ENCODE measurements at regions of chr19 and their contacts with region 1.

Region 1: DNA sequence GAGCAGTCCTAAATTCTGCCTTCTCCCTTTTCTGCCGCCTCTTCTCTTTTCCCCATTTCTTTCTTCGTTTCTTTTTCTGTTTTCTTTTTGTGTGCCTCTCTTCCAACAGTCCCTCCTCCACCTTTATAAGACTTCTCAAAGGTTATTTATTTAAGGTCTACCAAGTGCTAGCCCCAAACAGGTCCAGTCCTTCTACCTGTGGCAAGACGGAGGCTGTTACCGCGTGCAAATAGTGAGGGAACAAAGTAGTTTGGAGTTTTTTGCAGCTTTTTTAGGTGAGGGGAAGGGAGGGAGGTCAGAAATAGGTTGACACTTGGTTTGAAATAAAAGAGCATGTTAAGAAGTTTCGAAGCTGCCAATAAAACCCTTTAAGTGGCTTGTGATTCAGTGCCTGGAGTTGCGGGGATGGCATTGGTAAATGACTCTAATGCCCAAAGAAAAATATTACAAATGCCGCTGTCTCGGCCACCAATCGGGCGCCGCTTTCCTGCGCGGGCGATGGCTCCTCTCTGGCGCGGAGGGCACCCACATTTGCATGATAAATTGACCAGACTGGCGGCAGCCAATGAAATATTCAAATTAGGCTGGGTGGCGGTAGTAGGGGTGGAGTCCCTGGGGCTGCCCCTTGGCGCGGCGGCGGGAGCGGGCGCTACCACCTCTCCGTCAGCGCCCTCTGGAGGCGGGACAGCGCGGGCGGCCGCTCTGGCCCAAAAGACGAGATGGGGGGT is 7.5 kb upstream of the TSHZ3 start:
- DNase-seq: peak; percentile 86
- ATAC-seq: peak; percentile 88
- H3K4me3 Mint-ChIP-seq: peak overlapping the region; percentile 28
- H3K27ac Mint-ChIP-seq: no peak overlapping the region
- H3K4me1 Mint-ChIP-seq: peaks cover 40% of the 10 kb centered on the region
- H3K27me3 Mint-ChIP-seq: peaks cover 68% of the 10 kb centered on the region

Region 2: DNA sequence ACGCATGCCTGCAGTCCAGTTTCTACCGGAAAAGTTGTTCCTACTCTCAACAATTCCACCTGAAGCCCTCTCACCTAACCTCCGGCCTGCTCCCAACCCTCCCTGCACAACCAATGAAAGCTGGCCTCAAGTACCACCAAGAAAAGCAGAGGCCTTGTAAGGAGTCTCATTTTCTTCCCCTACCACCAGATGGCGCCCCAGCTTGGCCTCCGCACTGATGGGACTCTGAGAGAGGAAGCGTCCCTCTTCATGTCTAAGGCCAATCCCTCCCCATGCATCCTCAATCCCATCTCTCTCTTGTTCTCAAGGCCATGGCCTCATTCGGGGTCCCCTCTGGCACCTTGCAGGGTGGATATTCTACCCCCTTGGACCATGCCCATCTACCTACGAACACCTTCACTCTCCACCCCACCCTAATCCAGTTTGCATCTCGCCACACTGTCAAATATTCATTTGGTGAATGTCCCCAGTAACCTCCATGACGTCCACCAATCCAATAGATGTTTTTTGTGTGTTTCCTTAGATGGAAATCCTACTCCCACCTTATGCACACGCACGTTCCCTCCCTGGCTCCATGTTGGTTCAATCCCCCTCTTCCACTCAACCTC is 571.8 kb before region 1 on chr19:
- CTCF ChIA-PET with region 1: no interaction called
- POLR2A ChIA-PET with region 1: no interaction called
- intact Hi-C with region 1: loop called (anchors 1 to 2 kb)
- DNase-seq: peak; percentile 78
- ATAC-seq: peak; percentile 51
- H3K4me3 Mint-ChIP-seq: no peak overlapping the region
- H3K27ac Mint-ChIP-seq: no peak overlapping the region
- H3K4me1 Mint-ChIP-seq: no peaks in the 10 kb centered on the region
- H3K27me3 Mint-ChIP-seq: peaks cover 10% of the 10 kb centered on the region

Region 3: GRCh38 chr19:31054430-31054829 is 302.3 kb before region 1 on chr19:
- CTCF ChIA-PET with region 1: interaction called, 14 read pairs
- POLR2A ChIA-PET with region 1: no interaction called
- intact Hi-C with region 1: loop called (anchors 1 kb)
- DNase-seq: peak; percentile 62
- ATAC-seq: peak; percentile 69
- H3K4me3 Mint-ChIP-seq: no peak overlapping the region
- H3K27ac Mint-ChIP-seq: no peak overlapping the region
- H3K4me1 Mint-ChIP-seq: no peaks in the 10 kb centered on the region
- H3K27me3 Mint-ChIP-seq: peaks cover 18% of the 10 kb centered on the region

Region 4: GRCh38 chr19:31214086-31214485 is 142.7 kb before region 1 on chr19:
- CTCF ChIA-PET with region 1: no interaction called
- POLR2A ChIA-PET with region 1: no interaction called
- intact Hi-C with region 1: loop called in 1 of 2 experiments (anchors 2 kb)
- DNase-seq: peak; percentile 96
- ATAC-seq: peak; percentile 94
- H3K4me3 Mint-ChIP-seq: peak overlapping the region; percentile 61
- H3K27ac Mint-ChIP-seq: peak overlapping the region; percentile 99
- H3K4me1 Mint-ChIP-seq: peaks cover 36% of the 10 kb centered on the region
- H3K27me3 Mint-ChIP-seq: no peaks in the 10 kb centered on the region

Region 5: DNA sequence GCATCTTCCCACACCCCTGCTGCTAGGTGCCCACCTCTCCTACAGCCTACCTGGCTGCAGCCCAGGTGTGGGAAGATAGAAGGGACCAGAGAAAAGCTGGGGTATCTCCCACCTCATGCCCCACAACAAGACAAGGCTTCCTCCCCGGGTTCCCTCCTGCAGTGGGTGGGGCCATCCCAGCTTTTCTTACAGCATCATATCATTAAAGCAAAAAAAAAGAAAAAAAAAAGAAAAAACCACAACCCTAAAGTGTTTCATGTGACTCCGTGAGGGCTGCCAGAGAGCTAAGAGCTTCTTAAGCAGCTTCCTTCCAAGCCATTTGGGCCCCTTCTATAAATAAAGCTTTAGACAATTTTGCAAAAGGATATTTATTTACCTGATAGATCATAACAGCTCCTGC is 447.9 kb after region 1 on chr19:
- CTCF ChIA-PET with region 1: no interaction called
- POLR2A ChIA-PET with region 1: no interaction called
- intact Hi-C with region 1: no loop called
- DNase-seq: no peak
- ATAC-seq: no peak
- H3K4me3 Mint-ChIP-seq: no peak overlapping the region
- H3K27ac Mint-ChIP-seq: no peak overlapping the region
- H3K4me1 Mint-ChIP-seq: no peaks in the 10 kb centered on the region
- H3K27me3 Mint-ChIP-seq: no peaks in the 10 kb centered on the region